Posterior vena cava (tissue), 2 donors: ENCODE measurements at regions of chr11 and their contacts with region 1.

Region 1: GRCh38 chr11:100930185-100930778 is 199.3 kb downstream of the PGR start:
- DNase-seq: no peak

Region 2: DNA sequence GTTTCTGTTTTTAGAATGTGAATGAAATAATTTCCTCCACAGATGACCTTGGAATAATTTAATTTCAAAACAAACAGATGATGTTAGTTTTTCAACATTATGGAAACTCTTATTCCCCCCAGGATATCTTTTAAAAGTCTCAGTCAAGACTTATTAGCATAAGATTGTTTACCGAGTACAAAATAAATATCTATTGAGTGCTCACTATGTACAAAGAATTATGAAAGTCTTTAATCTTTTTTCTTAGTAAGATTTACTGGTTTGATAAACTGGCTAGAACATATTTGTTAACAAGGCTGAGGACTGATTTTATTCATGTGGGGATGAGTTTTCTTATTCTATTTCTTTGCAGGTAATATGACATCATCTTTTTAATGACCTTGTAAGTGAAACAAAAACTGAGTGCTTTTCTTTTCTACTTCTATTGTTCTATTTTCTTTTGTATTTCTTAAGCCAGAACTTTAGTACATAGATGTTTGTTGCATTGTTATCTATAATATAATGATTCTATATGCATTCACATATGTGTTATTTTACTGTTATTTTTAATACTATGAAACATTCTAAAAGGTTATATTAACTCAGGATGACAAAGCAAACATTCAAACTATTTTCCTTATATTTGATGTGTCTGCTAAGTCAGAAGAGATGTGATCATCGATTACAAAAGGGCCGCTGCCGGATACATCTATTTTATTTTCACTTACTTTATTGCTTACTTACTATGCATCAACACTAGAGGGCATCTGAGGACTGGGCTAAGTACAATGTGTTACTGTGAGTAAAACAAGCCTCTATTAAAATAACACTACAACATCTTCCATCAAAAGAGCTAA is 354.2 kb before region 1 on chr11:
- intact Hi-C with region 1: loop called (anchors 5 to 10 kb)
- DNase-seq: no peak

Region 3: GRCh38 chr11:100681064-100681502 is 249.2 kb before region 1 on chr11:
- intact Hi-C with region 1: loop called (anchors 5 to 10 kb)
- DNase-seq: no peak

Region 4: GRCh38 chr11:100687630-100688395 is 242.5 kb before region 1 on chr11:
- intact Hi-C with region 1: loop called (anchors 5 to 10 kb)
- DNase-seq: no peak

Region 5: DNA sequence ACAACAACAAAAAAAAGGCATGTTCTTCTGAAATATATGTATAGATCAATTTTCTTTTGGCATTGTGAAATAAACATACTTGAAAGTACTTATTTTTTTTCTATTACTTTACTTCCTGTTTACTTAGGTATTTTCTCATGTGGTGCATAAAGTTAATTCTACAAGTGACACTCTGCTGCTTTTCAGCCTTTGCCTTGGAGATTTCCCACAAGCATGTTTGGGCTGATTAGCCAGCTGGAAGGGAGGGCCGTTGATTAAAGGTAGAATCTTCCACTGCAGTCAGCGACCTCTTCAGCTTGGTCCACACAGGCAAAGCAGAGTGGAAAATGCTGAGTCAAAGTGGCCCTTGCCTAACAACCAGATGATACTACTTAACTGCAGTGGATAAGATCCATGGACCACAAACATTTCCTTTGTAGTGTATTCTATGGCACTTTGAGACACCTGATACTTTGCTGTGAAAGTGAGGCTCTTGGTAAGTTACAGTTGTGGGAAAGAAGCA is 67.2 kb before region 1 on chr11:
- intact Hi-C with region 1: loop called in 1 of 2 experiments (anchors 10 kb)
- DNase-seq: peak; percentile 74

Region 6: GRCh38 chr11:100876815-100877520 is 53.3 kb before region 1 on chr11:
- intact Hi-C with region 1: loop called in 1 of 2 experiments (anchors 10 kb)
- DNase-seq: no peak

Region 7: DNA sequence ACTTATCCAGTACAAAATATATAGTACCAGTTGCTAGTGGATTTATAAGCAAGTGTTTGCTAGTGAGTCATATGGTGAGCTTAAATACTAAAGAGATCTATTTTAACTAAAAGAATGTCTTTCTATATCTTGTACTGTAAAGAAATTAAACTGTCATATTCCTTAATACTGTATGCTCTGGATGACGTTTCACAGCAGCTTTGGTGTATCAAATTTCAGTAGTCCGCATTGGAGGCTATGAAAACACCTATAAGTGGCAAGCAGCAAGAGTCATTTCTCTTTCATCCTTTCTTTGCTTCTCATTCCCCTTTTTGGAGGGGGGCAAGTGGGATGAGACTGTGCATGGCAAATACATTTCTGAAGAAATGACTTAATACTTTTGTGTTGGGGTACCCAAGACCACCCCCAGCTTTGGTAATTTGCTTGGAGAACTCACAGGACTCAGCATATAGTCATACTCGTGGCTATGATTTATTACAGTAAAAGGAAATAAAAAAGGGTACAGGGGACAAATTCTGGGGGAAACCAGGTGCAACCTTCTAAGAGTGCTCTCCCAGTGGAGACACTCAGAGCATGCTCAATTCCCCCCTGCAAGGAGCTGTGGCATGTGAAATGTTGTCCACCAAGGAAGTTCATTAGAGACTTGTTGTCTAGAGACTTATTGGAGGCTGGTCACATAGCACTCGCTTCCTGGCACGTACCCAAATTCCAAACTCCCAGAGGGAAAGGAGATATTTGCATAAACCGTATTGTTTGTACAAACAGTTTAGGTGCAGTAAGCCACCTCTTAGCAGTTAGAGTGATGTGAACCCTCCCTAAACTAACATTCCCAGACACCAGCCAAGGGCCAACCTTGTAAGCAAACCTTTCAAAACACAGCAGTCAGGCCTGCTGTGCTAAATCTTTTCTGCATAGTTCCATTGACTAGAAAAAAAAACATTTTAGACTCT is 11.5 kb before region 1 on chr11:
- intact Hi-C with region 1: no loop called
- DNase-seq: no peak